ENCODE measurements at regions of chr7 and their contacts with region 1.

Region 1: GRCh38 chr7:152136686-152137085 is 111.2 kb downstream of the GALNT11 start:
- DNase-seq: no peak
- H3K4me3 ChIP-seq: no peak overlapping the region
- CTCF ChIP-seq: no peak

Region 2: GRCh38 chr7:152076324-152076866 is 60.3 kb before region 1 on chr7:
- in situ Hi-C with region 1: loop called (anchors 5 kb)
- DNase-seq: no peak
- H3K4me3 ChIP-seq: no peak overlapping the region
- CTCF ChIP-seq: peak; percentile 39

Region 3: GRCh38 chr7:152193880-152194279 is 57.2 kb after region 1 on chr7:
- in situ Hi-C with region 1: loop called (anchors 10 kb)
- DNase-seq: no peak
- H3K4me3 ChIP-seq: no peak overlapping the region
- CTCF ChIP-seq: no peak

Region 4: GRCh38 chr7:152751449-152752141 is 614.9 kb after region 1 on chr7:
- in situ Hi-C with region 1: no loop called
- DNase-seq: no peak
- H3K4me3 ChIP-seq: no peak overlapping the region
- CTCF ChIP-seq: no peak